Activated T-helper 2 cell treated with anti-CD3 and anti-CD28 coated beads, Interferon-gamma antibody, Interleukin-2, Interleukin-4, amounts not matched to agents 10 μg/mL and 5 μg/mL and 100 μg/mL, durations not matched to agents 14 hours and 24 hours and 36 hours (primary cell): ENCODE measurements at regions of chr7 and their contacts with region 1.

Region 1: DNA sequence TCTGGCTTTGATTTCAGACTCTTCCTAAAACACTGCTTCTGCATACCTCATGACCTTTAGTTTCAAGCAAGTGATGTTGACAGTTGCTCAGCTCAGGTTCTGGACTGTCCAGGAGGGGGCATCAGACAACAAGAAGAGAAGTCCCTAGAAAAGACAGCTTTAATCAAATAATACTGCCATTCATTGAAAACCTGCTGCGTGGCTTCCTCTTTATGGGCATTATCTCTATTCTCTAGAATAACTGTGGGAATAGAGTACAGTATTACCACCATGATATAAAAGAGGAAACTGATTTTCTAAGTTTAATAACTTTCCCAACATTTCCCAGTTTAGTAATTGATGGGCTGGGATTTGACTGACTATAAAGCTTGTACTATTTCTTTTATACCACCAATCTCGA is 170.4 kb downstream of the SNX13 start:
- DNase-seq: peak; percentile 32
- H3K4me3 Mint-ChIP-seq: no peak overlapping the region
- H3K27ac Mint-ChIP-seq: no peak overlapping the region
- H3K4me1 Mint-ChIP-seq: peaks cover 5% of the 10 kb centered on the region
- H3K27me3 Mint-ChIP-seq: no peaks in the 10 kb centered on the region

Region 2: DNA sequence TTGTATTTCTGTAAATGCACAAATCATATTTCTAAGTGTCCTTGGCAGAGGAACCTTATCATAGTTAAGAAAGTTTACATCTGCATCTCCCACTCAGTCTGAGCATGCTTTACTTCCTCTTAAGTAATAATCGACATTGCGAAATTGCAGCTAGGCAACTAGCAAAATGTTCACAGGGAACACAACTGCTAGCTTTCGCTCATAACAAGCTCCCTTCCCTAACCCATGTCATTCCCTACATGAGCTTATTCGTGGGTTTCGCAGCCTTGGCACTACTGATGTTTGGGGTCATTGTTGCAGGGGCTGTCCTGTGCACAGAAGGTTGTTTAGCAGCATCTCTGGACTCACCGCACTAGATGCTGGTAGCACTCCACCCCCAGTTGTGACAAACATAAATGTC is 399.8 kb before region 1 on chr7:
- intact Hi-C with region 1: no loop called
- DNase-seq: no peak
- H3K4me3 Mint-ChIP-seq: no peak overlapping the region
- H3K27ac Mint-ChIP-seq: no peak overlapping the region
- H3K4me1 Mint-ChIP-seq: peaks cover 17% of the 10 kb centered on the region
- H3K27me3 Mint-ChIP-seq: no peaks in the 10 kb centered on the region

Region 3: DNA sequence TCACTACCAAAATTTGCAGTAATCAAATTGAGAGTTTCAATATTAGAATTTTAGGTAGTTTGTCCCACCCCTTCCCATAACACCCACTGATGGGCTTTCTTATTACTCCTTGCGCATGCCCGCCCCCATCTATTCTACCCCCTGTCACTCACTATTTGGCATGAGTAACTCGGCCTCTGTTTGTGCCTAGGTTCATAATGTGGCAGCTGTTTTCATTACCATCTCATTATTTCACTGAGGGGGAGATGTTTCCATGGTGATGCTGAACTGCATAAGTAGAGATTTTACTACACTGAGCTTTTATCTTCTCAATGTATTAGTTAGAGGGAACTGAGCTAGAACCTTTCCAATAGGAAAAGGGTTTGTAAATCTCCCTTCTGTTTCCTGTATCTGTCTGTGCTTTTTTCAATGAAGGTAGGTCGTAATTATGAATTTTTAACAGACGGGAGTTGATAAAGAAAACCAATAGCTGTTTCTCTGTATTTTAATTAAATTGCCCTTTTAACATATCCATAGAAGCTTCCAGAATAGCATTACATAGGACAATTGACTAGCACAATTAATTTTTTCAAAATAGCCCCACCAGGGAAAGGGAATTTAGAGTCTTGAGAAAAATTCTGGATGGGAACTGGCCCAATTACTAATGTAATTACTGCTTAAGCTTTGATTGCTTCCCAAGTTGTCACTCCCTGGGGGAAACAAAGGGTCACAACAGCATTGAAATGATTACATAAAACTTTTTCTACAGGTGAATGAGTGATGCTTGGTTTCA is 224.3 kb after region 1 on chr7:
- intact Hi-C with region 1: loop called (anchors 1 kb)
- DNase-seq: no peak
- H3K4me3 Mint-ChIP-seq: no peak overlapping the region
- H3K27ac Mint-ChIP-seq: no peak overlapping the region
- H3K4me1 Mint-ChIP-seq: no peaks in the 10 kb centered on the region
- H3K27me3 Mint-ChIP-seq: peaks cover 5% of the 10 kb centered on the region

Region 4: DNA sequence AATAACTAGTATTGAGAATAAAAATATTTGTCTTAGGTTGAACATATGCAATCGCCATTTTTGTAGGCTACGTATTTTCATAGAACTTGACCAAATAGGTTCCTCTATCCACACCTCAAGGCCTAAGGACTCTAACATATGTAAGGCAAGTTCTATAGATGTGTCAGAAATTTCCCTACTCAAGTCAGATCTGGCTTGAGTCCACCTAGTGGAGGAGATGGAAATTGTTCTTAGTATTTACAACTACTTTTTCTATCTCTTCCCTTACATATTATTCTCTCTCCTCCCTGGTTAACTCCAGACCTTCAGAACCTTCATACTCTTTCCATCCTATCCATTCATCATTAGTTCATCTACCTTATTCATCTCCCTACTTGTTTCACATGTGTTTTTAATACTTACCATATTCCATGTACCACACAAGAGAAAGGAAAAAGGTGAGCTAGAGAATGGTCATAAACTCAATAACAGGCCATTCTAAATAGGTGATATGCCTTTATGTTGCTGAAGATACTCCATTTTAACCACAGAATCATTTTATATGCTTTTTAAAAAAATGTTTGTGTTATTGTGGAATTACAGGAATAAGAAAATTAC is 551.2 kb after region 1 on chr7:
- intact Hi-C with region 1: loop called (anchors 1 kb)
- DNase-seq: no peak
- H3K4me3 Mint-ChIP-seq: no peak overlapping the region
- H3K27ac Mint-ChIP-seq: no peak overlapping the region
- H3K4me1 Mint-ChIP-seq: no peaks in the 10 kb centered on the region
- H3K27me3 Mint-ChIP-seq: no peaks in the 10 kb centered on the region

Region 5: DNA sequence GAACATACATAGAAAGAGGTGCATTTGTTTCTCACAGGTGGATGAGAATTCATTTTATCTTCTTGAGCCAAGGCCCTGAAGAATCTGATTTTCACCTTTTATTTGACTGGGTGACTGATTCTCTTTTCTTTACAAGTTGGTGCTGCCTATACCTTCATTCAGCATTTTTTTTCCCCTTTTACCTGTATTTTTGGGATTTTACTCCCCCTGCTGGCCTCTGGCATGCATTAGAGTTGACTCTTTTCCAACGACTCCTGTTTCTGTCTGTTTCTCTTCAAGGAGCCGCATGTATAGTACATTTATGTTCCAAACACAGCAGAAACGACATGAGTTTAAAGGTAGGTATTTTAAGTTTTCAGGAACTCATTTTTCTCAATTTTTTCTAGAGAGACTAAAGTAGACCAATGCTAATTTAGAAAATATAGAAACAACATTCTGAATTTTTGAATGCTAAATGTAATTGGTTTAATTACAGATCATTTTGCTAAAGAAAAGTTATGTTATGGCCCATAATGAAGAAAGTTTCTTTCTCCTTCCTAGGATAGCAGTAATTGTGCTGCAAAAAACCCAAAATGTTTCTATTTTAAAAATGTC is 575.8 kb after region 1 on chr7:
- intact Hi-C with region 1: loop called (anchors 1 kb)
- DNase-seq: no peak
- H3K4me3 Mint-ChIP-seq: no peak overlapping the region
- H3K27ac Mint-ChIP-seq: no peak overlapping the region
- H3K4me1 Mint-ChIP-seq: no peaks in the 10 kb centered on the region
- H3K27me3 Mint-ChIP-seq: peaks cover 3% of the 10 kb centered on the region